WTC11 (cell line): ENCODE measurements at regions of chr10 and their contacts with region 1.

Region 1: GRCh38 chr10:84163996-84164395 is 9.6 kb upstream of the GPR15LG start:
- DNase-seq: no peak
- ATAC-seq: no peak
- H3K4me3 Mint-ChIP-seq: peak overlapping the region; percentile 47
- H3K27ac Mint-ChIP-seq: 0 out of 2 replicates have a peak overlapping the region, but pooled peaks have one; percentile 85
- H3K4me1 Mint-ChIP-seq: peaks cover 74% of the 10 kb centered on the region
- H3K27me3 Mint-ChIP-seq: peaks cover 5% of the 10 kb centered on the region; the same call in 1 of the 2 replicates
- CTCF ChIP-seq: no peak

Region 2: DNA sequence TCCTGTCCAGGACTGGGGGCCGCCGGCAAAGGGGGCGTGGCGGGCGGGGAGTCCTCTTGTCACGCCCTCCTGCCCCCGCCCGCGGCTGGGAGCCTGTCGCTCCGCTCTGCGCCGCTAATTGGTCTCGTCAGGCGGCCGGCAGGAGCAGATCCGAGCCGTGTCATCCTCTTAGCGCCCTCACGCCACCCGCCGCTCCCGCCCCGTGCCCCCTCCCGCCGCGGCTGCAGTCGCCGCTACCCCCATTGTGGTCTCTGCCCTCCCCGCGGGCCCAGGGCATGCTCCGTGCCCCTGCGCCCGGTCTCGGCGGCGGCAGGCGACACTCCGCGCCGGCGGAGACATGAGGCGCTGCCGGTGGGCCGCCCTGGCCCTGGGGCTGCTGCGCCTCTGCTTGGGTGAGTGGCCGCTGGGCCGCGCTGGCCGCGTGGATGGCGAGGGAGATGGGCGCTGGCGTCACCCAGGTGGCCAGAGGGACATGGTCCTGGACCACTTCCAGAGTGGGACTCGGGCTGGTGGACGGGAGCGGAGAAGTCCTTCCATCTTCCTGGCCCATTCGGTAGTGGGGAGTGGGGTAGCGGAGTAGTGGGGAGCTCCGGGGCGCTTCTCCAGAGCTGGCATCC is 30.5 kb after region 1 on chr10 and contains the start of gene CDHR1:
- CTCF ChIA-PET with region 1: no interaction called
- POLR2A ChIA-PET with region 1: no interaction called
- DNase-seq: peak; percentile 73
- ATAC-seq: peak; percentile 85
- H3K4me3 Mint-ChIP-seq: peak within 1 kb of the TSS; percentile 68
- H3K27ac Mint-ChIP-seq: no peak within 1 kb of the TSS
- H3K4me1 Mint-ChIP-seq: peaks cover 9% of the 10 kb centered on the region; the same call in 1 of the 2 replicates
- H3K27me3 Mint-ChIP-seq: peaks cover 57% of the 10 kb centered on the region
- CTCF ChIP-seq: no peak
- total RNA-seq, gene CDHR1: 5.0 to 7.2 TPM (median 6.4 TPM) in 3 replicates

Region 3: GRCh38 chr10:84205049-84205852 is 41.3 kb after region 1 on chr10:
- CTCF ChIA-PET with region 1: interaction called, 11 read pairs
- POLR2A ChIA-PET with region 1: no interaction called
- DNase-seq: peak; percentile 82
- ATAC-seq: peak; percentile 80
- H3K4me3 Mint-ChIP-seq: no peak overlapping the region
- H3K27ac Mint-ChIP-seq: no peak overlapping the region
- H3K4me1 Mint-ChIP-seq: no peaks in the 10 kb centered on the region
- H3K27me3 Mint-ChIP-seq: no peaks in the 10 kb centered on the region
- CTCF ChIP-seq: peak; percentile 75